Psoas muscle (tissue), 8 donors: ENCODE measurements at regions of chr4 and their contacts with region 1.

Region 1: GRCh38 chr4:87451537-87451936 is 29.2 kb downstream of the NUDT9 start:
- DNase-seq: no peak
- ATAC-seq: no peak
- H3K4me3 ChIP-seq: no peak overlapping the region
- H3K27ac ChIP-seq: no peak overlapping the region
- H3K4me1 ChIP-seq: no peaks in the 10 kb centered on the region
- H3K27me3 ChIP-seq: no peaks in the 10 kb centered on the region
- CTCF ChIP-seq: no peak

Region 2: DNA sequence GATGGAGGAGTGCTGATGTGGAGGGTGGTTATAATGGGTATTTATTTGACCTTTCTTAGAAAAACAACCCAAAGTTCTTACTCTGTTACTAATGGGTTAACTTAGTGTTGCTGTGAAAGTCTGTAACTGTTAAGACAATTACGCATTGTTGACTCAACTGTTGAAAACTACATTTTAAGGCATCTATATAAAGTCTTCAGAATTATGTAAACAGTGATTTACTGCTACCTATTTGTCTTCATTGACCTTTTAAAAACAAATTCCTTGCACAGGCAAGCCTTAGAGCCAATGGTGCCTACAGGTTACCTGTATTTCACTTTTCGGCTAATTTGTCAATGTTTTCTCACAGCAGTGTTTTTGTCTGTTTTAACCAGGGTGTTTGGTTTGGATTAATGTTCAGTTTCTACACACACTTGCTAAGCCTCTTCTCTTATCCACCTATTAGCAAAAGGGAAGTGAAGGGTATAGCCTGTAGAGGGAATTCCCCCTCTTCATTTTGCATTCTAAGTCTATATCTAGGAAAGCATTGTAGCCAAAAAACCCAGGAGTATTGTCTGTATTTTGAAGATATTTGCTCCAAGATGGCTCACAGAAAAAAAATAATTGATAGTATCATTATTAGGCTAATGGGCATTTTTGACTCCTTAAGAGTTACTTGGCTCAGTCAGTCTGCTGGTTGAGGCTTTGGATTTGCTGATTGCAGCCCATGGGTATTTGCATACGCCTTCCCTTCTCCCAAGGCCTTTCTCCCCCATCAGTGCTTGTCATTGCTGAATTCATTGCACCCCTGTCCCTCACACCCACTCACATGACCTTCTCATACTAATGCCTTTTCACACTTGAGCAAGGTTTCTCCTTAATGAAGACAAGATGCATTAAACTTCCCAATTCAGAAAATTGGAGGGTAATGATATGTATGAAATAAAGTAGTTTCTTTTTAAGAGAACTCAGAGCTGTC is 486.2 kb before region 1 on chr4:
- intact Hi-C with region 1: no loop called
- DNase-seq: no peak
- ATAC-seq: no peak
- H3K4me3 ChIP-seq: no peak overlapping the region
- H3K27ac ChIP-seq: no peak overlapping the region
- H3K4me1 ChIP-seq: peaks cover 43% of the 10 kb centered on the region
- H3K27me3 ChIP-seq: no peaks in the 10 kb centered on the region
- CTCF ChIP-seq: no peak

Region 3: GRCh38 chr4:87260477-87260876 is 191.1 kb before region 1 on chr4:
- intact Hi-C with region 1: loop called in 1 of 2 experiments (anchors 10 kb)
- DNase-seq: no peak
- ATAC-seq: no peak
- H3K4me3 ChIP-seq: no peak overlapping the region
- H3K27ac ChIP-seq: no peak overlapping the region
- H3K4me1 ChIP-seq: no peaks in the 10 kb centered on the region
- H3K27me3 ChIP-seq: no peaks in the 10 kb centered on the region
- CTCF ChIP-seq: no peak

Region 4: DNA sequence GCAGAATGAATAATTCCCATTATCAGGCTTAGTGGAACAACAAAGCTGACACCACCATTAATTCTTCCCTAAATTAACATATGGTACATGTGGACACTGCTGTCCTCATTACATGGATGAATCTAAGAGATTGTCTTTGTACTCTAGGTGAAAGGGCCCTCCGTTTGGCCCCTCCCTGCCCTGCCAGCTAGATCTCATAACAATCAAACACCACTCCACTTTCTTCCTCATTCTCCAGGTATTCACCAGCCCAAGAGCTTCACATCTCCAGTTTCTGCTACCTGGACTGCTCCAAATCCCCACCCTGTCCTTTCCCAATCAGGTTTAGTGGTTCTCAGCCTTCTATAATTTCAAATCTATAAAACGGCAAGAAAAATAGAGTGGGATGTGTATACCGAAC is 64.3 kb before region 1 on chr4:
- intact Hi-C with region 1: no loop called
- DNase-seq: no peak
- ATAC-seq: no peak
- H3K4me3 ChIP-seq: no peak overlapping the region
- H3K27ac ChIP-seq: no peak overlapping the region
- H3K4me1 ChIP-seq: peaks cover 7% of the 10 kb centered on the region
- H3K27me3 ChIP-seq: no peaks in the 10 kb centered on the region
- CTCF ChIP-seq: no peak